A549 (cell line): ENCODE measurements at regions of chr1 and their contacts with region 1.

Region 1: DNA sequence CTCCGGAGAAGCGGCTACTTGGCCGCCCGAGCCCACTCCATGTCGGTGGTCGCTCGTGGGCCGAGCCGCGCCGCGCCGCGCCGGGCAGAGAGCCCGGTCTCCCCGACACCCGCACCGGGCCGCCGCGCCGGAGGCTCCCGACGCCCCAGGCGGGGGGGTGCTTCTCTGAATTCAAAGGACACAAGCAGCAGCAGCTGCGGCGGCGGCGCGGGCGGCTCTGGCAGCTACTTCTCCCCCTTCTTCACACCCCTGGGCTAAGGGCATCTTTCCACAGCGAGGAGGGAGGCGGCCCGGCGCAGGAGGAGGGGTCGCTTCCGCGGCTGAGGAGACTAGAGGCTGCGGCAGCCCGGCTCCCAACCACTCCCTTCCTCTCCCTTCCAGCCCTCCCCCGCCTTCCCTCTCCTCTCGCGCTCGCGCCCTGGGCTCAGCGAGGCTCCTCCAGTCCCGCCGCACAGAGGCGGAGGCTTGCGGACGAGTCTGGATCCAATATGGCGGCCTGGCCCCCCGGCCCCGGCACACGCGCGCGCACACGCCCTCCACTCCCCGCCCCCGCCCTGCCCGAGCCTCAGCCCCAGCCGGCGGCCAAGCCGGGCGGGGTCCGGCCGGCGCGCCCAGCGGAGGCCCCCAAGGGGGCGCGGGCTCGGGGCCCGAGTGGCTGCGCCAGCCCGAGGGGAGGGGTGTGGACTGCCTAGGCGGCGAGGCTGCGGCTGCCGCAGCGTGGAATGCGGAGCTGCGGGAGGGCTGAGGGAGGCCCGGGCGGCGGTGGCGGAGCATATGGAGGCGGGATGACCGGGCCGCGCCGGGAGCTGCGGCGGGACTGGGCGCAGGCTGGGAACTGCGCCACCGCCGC is at the start of gene CDC42BPA:
- DNase-seq: peak; percentile 81 to 90
- ATAC-seq: peak; percentile 91 to 92
- H3K4me3 ChIP-seq: peak within 1 kb of the TSS; percentile 84
- H3K27ac ChIP-seq: peak within 1 kb of the TSS; percentile 97 to 99
- H3K4me1 ChIP-seq: peaks cover 14% of the 10 kb centered on the region; the same call in 1 of the 3 replicates
- CTCF ChIP-seq: no peak
- EP300 ChIP-seq: no peak; a peak in 1 of 5 replicates
- POLR2A ChIP-seq: peak; percentile 48
- RAD21 ChIP-seq: no peak; a peak in 1 of 5 replicates
- polyA plus RNA-seq, gene CDC42BPA: 25.9 and 28.4 TPM in 2 replicates

Region 2: DNA sequence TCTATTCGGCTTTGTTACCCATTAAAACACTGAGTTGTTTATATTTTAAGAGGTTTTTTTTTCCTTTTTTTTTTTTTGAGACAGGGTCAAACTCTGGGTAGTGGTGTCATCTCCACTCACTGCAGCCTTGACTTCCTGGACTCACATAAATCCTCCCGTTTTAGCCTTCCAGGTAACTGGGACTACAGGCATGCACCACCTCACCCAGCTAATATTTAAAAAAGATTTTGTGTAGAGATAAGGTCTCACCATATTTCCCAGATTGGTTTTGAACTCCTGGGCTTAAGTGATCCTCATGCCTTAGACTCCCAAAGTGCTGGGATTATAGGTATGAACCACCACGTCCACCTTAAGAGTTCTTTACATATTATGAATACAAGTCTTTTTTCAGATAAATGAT is 231.6 kb before region 1 on chr1:
- CTCF ChIA-PET with region 1: no interaction called
- POLR2A ChIA-PET with region 1: no interaction called
- DNase-seq: no peak
- ATAC-seq: no peak
- H3K4me3 ChIP-seq: no peak overlapping the region
- H3K27ac ChIP-seq: no peak overlapping the region
- H3K4me1 ChIP-seq: no peaks in the 10 kb centered on the region
- CTCF ChIP-seq: no peak
- EP300 ChIP-seq: no peak
- POLR2A ChIP-seq: no peak
- RAD21 ChIP-seq: no peak

Region 3: DNA sequence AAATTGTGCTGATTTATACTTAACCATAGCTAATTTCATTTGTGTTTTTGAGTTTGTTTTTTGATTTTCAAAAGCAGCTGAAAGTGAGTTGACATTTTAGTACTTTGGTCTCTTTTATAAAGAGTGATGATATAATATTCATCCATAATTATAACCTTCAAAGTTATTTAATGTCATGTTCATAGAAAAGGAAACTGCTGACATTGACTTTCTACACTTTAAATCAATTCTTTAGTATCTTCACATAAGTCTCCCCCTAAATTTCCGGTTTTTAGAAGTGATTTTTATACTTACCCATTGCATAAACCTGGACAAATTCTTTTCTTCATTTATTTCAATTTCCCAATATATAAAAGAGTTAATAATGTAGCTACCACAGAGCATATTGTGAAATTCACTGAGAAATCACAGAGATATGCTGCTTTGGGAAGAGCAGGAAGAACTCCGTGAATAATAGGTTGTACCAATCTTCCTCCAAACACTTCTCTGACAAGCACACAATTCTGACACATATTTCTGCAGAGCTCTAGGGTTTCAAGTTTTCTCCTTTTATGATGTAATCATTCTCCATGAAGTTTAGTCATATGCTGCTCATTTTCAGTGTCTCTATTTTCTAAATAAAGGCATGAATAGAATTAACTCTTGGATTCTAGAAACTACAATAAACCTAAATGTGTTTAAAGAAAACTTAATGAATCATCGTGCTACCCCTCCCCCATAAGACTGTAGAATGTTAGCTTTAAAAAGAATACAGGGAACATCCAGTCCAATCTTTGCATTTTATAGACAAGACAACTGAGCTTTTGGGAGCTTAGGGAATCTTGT is 25.7 kb after region 1 on chr1:
- CTCF ChIA-PET with region 1: interaction called, 5 read pairs
- POLR2A ChIA-PET with region 1: interaction called, 12 read pairs
- DNase-seq: peak; percentile 32 to 58
- ATAC-seq: peak; percentile 86 to 98
- H3K4me3 ChIP-seq: no peak overlapping the region
- H3K27ac ChIP-seq: peak overlapping the region; percentile 65 to 68
- H3K4me1 ChIP-seq: peaks cover 17% of the 10 kb centered on the region
- CTCF ChIP-seq: no peak
- EP300 ChIP-seq: no peak
- POLR2A ChIP-seq: no peak
- RAD21 ChIP-seq: peak in 1 of 2 experiments; percentile 35; a peak in 1 of 5 replicates

Region 4: DNA sequence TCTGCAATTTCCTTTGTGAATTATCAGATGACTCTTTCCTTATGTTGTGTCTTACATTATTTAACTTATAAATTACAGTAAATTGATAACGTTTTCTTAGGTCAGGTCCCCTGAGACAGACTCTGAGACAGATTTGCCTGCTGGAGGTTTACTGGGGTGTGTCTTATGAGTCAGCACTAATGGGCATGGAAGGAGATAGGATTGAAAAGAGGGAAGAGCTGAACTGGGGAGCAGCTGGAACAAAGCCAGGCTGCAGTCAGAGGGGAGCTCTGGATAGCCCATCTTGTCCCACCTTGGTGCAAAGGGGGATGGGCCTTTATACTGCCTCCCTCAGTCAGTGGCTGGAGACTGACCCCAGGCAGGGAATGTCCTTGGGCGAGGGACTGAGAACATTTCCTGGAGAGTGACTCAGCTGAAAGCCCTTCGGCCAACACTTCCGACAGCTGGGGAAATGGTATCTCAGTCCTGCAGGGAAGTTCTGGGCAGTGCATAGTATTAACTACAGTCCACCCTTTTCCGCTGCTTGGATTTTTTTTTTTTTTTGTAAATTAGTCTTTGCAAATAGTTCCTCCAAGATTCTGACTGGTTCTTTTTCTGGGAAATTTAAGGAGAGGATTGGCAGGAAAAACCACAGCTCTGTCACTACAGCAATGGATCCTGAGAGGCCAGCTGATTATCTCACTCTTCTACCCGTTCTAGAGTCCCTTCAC is 39.1 kb after region 1 on chr1:
- CTCF ChIA-PET with region 1: no interaction called
- POLR2A ChIA-PET with region 1: interaction called, 14 read pairs
- DNase-seq: peak; percentile 87 to 91
- ATAC-seq: peak; percentile 95
- H3K4me3 ChIP-seq: 0 out of 3 replicates have a peak overlapping the region, but pooled peaks have one; percentile 0
- H3K27ac ChIP-seq: peak overlapping the region; percentile 86 to 92
- H3K4me1 ChIP-seq: peaks cover 24% of the 10 kb centered on the region
- CTCF ChIP-seq: no peak
- EP300 ChIP-seq: peak; percentile 15 to 58; a peak in 2 of 5 replicates
- POLR2A ChIP-seq: no peak
- RAD21 ChIP-seq: peak in 1 of 2 experiments; percentile 38; a peak in 3 of 5 replicates